ENCODE measurements at regions of chr16 and their contacts with region 1.

Region 1: GRCh38 chr16:48353565-48354163 is 31.5 kb downstream of the SIAH1 start:
- DNase-seq: peak; percentile 78
- ATAC-seq: peak; percentile 83
- H3K4me3 Mint-ChIP-seq: no peak overlapping the region
- H3K27ac Mint-ChIP-seq: peak overlapping the region; percentile 51
- H3K4me1 Mint-ChIP-seq: peaks cover 25% of the 10 kb centered on the region
- H3K27me3 Mint-ChIP-seq: no peaks in the 10 kb centered on the region

Region 2: GRCh38 chr16:48244080-48244862 is 109.4 kb before region 1 on chr16 and contains the start of gene LONP2:
- CTCF ChIA-PET with region 1: no interaction called
- POLR2A ChIA-PET with region 1: no interaction called
- intact Hi-C with region 1: loop called in 1 of 2 experiments (anchors 5 kb)
- DNase-seq: peak; percentile 95
- ATAC-seq: peak; percentile 94
- H3K4me3 Mint-ChIP-seq: peak within 1 kb of the TSS; percentile 91
- H3K27ac Mint-ChIP-seq: peak within 1 kb of the TSS; percentile 88
- H3K4me1 Mint-ChIP-seq: peaks cover 36% of the 10 kb centered on the region
- H3K27me3 Mint-ChIP-seq: no peaks in the 10 kb centered on the region
- total RNA-seq, gene LONP2: 60.3 to 63.2 TPM

Region 3: DNA sequence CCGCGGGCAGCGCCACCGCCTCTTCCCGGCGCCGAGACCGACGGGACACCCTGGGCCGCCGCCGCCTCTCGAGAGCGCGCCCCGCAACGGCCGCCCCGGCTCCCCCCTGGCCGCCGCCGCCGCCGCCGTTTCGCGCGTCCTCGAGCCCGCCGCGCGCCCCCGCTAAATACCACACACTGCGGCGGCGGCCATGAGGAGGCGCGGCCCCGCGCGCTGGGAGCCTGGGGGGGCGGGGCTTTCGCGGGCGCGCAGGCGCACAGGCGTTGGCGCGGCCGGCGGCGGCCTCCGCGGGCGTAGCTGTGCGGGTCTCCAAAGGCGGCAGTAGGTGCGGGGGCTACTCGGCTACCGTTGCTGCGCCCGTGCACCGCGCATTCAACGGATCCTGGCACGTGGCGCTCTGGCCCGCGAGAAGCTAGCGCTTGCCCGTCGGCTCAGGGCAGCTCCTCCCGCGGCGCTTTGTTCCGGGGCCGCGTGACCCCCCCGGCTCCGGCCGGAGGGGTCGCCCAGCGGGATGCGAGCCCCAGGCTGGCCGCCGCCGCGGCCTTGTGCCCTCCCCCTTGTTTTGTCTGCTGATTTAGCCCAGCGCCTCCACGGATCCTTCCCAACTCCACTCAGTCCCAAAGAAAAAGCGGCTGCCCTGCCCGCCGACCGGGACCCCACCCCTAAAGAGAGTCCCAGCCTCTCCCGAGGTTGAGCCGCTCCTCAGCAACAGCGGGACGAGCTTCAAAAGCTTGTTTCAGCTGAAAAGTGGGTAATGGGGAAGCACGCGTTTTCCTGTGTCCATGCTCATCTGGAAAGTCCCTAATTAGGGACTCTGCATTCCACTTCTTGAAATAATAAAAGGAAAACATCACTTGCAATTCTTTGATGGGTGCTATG is 31.8 kb after region 1 on chr16 and contains the start of gene SIAH1:
- CTCF ChIA-PET with region 1: interaction called, 3 read pairs
- POLR2A ChIA-PET with region 1: no interaction called
- intact Hi-C with region 1: loop called in 1 of 2 experiments (anchors 1 kb)
- DNase-seq: peak; percentile 91
- ATAC-seq: peak; percentile 82
- H3K4me3 Mint-ChIP-seq: peak within 1 kb of the TSS; percentile 85
- H3K27ac Mint-ChIP-seq: peak within 1 kb of the TSS; percentile 90
- H3K4me1 Mint-ChIP-seq: peaks cover 21% of the 10 kb centered on the region
- H3K27me3 Mint-ChIP-seq: no peaks in the 10 kb centered on the region
- total RNA-seq, gene SIAH1: 13.1 to 13.3 TPM

Region 4: DNA sequence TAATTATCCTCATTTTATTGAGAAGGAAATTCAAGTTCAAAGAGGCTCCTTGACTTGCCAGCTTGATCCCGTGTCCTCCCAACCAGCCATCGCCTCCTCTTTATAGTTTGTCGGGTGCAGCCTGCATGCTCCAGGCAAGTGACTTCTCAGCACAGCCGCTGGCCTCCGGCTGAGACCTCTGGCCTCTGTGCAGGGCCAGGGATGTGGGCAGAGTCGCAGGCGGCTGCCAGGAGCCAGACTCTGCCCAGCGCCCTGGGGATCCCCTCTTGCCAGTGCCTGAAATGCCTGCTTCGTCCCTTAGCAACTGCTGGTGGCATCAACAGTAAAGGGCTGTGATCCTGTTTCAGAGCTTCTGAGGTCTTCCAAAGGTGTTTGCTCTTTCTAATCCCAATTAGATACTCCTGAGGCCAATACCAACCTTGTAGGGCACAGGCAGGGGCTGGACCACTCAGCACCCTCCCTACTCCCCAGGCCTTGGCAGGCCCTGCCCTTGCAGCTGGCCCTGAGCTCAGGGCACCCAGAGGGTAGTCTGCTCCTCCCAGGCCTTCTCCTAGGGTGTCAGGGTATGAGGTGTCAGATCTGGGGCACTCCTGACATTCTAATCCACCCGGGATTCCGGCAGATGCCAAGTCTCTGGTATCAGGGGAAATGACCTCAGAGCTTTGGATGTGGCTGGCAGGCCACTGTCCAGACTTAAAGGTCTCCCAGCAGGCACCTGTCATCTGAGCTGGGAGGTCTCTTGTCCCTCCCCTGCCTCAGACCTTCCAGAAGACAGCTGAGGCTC is 99.5 kb after region 1 on chr16:
- CTCF ChIA-PET with region 1: interaction called, 3 read pairs
- POLR2A ChIA-PET with region 1: no interaction called
- intact Hi-C with region 1: loop called in 1 of 2 experiments (anchors 1 kb)
- DNase-seq: no peak
- ATAC-seq: no peak
- H3K4me3 Mint-ChIP-seq: no peak overlapping the region
- H3K27ac Mint-ChIP-seq: no peak overlapping the region
- H3K4me1 Mint-ChIP-seq: peaks cover 2% of the 10 kb centered on the region
- H3K27me3 Mint-ChIP-seq: peaks cover 16% of the 10 kb centered on the region

Region 5: GRCh38 chr16:48526058-48526957 is 172.6 kb after region 1 on chr16:
- CTCF ChIA-PET with region 1: interaction called, 5 read pairs
- POLR2A ChIA-PET with region 1: no interaction called
- intact Hi-C with region 1: loop called (anchors 1 kb)
- DNase-seq: peak; percentile 71
- ATAC-seq: peak; percentile 90
- H3K4me3 Mint-ChIP-seq: no peak overlapping the region
- H3K27ac Mint-ChIP-seq: no peak overlapping the region
- H3K4me1 Mint-ChIP-seq: no peaks in the 10 kb centered on the region
- H3K27me3 Mint-ChIP-seq: no peaks in the 10 kb centered on the region

Region 6: GRCh38 chr16:48542020-48542473 is 188.4 kb after region 1 on chr16:
- CTCF ChIA-PET with region 1: no interaction called
- POLR2A ChIA-PET with region 1: no interaction called
- intact Hi-C with region 1: loop called (anchors 1 to 5 kb)
- DNase-seq: peak; percentile 47
- ATAC-seq: peak; percentile 56
- H3K4me3 Mint-ChIP-seq: no peak overlapping the region
- H3K27ac Mint-ChIP-seq: no peak overlapping the region
- H3K4me1 Mint-ChIP-seq: peaks cover 10% of the 10 kb centered on the region
- H3K27me3 Mint-ChIP-seq: no peaks in the 10 kb centered on the region

Measured in activated CD4-positive, alpha-beta T cell treated with anti-CD3 and anti-CD28 coated beads for 36 hours (primary cell).